B cell (primary cell): ENCODE measurements at regions of chr10 and their contacts with region 1.

Region 1: DNA sequence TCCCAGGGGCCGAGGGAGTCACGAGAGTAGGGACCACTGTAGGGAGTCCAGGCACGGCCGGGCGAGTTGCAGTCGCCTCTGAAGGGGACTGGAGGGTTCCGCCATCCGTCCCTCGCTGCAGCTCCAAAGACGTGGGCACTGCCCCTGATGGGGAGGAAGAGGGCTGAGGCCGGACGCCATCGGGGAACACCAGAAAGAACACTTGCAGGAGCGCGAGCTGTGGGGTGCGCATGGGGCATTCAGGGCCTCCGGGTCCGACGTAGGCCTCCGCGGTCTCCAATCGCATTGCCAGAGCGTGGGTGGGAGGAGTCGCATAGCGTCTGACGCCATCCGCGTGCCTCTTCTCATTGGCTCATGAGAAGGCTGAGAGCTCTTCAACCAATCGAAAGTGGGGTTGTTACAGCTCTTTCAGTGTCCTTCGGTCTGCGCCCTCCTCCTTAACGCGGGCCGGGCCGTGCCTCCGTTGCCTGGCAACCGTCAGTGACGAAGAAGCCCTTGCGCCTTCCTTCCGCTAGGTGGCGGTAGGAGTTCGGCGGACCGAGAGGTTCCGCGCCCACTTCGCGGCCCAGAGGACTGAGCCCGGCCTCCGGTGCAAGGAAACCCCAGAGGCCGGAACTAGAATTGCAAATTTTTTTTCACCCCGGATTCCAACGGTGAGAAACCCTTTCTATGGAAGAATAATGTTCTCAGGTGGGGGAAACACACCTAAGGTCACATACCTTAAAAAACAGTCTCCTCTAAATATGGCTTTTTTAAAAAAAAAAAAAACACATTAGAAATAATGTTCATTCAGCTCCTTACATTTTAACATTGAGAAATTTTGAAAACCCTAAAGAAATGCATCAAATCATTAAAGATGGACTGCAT is at the start of gene TCTN3:
- DNase-seq: peak; percentile 100
- ATAC-seq: peak; percentile 97
- H3K4me3 ChIP-seq: peak within 1 kb of the TSS; percentile 61 to 96 (median 73)
- H3K4me3 Mint-ChIP-seq: peak within 1 kb of the TSS; percentile 95
- H3K27ac ChIP-seq: peak within 1 kb of the TSS; percentile 58 to 93
- H3K27ac Mint-ChIP-seq: peak within 1 kb of the TSS; percentile 95
- H3K4me1 ChIP-seq: peaks cover 36 to 39% of the 10 kb centered on the region in 2 donors
- H3K4me1 Mint-ChIP-seq: peaks cover 67% of the 10 kb centered on the region
- H3K27me3 ChIP-seq: no peaks in the 10 kb centered on the region
- H3K27me3 Mint-ChIP-seq: no peaks in the 10 kb centered on the region
- CTCF ChIP-seq: peak; percentile 98
- total RNA-seq, gene TCTN3: 33.6 and 34.1 TPM in 2 replicates

Region 2: GRCh38 chr10:95706986-95707385 is 13.1 kb after region 1 on chr10:
- CTCF ChIA-PET with region 1: interaction called, 20 read pairs
- POLR2A ChIA-PET with region 1: interaction called, 3 read pairs
- intact Hi-C with region 1: no loop called
- DNase-seq: no peak
- ATAC-seq: no peak
- H3K4me3 ChIP-seq: no peak overlapping the region
- H3K4me3 Mint-ChIP-seq: no peak overlapping the region
- H3K27ac ChIP-seq: no peak overlapping the region
- H3K27ac Mint-ChIP-seq: no peak overlapping the region
- H3K4me1 ChIP-seq: no peaks in the 10 kb centered on the region
- H3K4me1 Mint-ChIP-seq: peaks cover 5% of the 10 kb centered on the region
- H3K27me3 ChIP-seq: no peaks in the 10 kb centered on the region
- H3K27me3 Mint-ChIP-seq: no peaks in the 10 kb centered on the region
- CTCF ChIP-seq: no peak

Region 3: DNA sequence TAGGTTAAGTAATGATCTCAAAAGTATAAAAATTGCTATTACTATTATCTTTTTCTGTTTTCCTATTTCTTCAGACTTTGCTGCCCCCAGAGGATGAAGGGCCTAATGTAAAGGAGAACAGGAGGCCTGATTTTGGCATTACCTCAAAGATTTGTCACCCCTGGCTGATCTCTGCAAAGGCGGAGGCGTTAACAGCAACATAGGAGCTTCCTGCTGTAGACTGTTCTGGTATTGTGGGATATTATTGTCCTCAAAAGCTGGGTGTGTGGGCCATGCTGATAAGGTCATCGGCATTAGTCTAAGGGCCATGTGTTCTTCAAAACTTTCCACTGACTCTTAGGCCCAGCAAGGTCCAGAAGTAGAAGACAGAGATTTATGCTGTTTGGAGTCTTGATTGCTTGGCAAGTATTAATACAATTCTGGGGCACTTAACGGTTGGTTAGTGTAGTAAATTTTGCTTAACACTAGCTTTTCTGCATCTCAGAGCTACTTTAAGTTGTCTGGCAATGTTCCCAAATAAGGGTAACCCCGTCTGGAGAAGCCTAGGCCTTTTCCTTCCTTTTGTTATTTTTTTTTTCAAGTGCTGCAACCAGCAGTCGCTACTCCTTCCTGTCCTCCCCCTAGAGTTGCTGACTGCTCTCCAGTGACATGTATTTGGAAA is 48.0 kb after region 1 on chr10:
- CTCF ChIA-PET with region 1: interaction called, 115 read pairs
- POLR2A ChIA-PET with region 1: interaction called, 5 read pairs
- intact Hi-C with region 1: loop called (anchors 1 kb)
- DNase-seq: peak; percentile 79
- ATAC-seq: peak; percentile 84
- H3K4me3 ChIP-seq: peak overlapping the region; percentile 7 to 63 (median 49)
- H3K4me3 Mint-ChIP-seq: peak overlapping the region; percentile 90
- H3K27ac ChIP-seq: peak overlapping the region; percentile 76 to 78
- H3K27ac Mint-ChIP-seq: peak overlapping the region; percentile 98
- H3K4me1 ChIP-seq: peaks cover 44 to 48% of the 10 kb centered on the region in 2 donors
- H3K4me1 Mint-ChIP-seq: peaks cover 55% of the 10 kb centered on the region
- H3K27me3 ChIP-seq: no peaks in the 10 kb centered on the region
- H3K27me3 Mint-ChIP-seq: no peaks in the 10 kb centered on the region
- CTCF ChIP-seq: peak; percentile 66

Region 4: DNA sequence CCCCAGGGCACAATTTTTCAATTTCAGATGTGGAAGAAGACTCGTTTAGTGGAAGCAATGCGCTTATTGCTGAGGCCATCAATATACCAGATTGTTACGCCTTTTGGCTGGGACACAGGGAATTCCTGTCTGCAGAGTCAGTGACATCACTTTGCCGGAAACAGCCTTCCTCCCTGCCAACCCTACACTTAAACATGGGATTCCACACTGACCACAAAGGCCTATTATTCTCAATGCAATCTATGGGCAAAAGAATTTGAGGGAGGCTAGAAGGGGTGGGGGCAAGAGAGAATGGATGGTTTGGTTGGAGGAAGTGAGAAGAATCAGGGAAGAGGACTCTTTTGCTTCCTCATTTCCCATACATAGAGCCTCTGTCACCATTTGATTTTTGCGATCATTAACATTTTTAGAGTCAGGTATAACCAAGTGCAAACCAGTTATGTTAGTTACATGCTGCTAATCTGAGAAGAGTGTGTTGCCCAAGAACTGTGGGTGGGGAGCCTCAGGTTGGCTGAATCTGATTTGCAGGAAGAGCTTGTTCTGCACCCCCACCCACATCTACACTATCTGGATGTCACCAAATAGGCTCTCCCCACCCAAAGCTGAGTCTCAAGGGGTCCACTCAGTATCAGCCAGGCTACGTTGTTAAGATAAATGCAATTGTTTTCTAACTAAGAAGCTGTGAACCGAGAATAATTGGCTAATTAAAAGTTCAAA is 120.3 kb after region 1 on chr10:
- CTCF ChIA-PET with region 1: interaction called, 57 read pairs
- POLR2A ChIA-PET with region 1: interaction called, 4 read pairs
- intact Hi-C with region 1: no loop called
- DNase-seq: no peak
- ATAC-seq: peak; percentile 45
- H3K4me3 ChIP-seq: no peak overlapping the region
- H3K4me3 Mint-ChIP-seq: peak overlapping the region; percentile 52
- H3K27ac ChIP-seq: no peak overlapping the region
- H3K27ac Mint-ChIP-seq: peak overlapping the region; percentile 28
- H3K4me1 ChIP-seq: peaks cover 27 to 46% of the 10 kb centered on the region in 2 donors
- H3K4me1 Mint-ChIP-seq: peaks cover 67% of the 10 kb centered on the region
- H3K27me3 ChIP-seq: no peaks in the 10 kb centered on the region
- H3K27me3 Mint-ChIP-seq: no peaks in the 10 kb centered on the region
- CTCF ChIP-seq: no peak

Region 5: DNA sequence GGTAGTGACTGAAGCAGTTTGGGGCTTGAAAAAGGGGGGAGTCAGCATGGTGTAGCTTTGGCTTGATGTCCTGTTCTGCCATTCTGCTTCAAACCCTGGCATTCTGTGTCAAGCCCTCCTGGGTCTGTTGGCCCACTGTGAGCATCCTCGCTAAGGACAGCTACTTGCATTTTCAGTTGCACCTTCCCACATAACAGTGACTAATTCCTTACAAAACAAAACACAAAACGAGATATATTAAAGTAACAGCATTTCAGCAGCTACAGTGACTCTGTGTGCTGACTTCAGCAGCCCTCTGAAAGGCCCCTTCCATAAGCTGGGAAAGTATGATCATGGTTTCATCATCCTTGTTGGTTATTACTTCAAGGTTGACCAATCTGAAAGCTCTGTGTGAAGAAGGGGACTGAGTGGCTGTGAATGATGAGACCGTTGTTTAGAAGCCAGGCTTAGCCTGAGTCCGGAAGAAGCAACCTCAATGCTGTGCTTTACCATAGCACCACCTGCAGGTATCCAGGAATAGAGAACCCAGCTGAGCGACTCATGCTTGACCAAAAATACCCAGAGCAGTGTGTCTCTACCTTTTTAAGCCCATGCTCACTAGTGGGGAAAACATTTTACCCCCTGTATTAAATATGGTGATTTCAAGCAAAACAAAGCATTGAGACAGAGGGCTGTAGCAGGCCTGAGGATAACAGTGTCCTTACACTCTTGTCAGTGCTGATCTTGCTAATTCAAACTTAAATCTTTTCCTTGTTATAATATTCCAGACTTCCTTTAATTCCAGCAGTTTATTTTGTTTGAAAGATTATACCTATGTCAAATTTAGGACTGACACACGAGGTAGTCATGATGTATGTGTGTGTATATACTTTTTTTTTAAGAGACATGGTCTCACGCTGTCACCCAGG is 171.3 kb after region 1 on chr10:
- CTCF ChIA-PET with region 1: interaction called, 221 read pairs
- POLR2A ChIA-PET with region 1: interaction called, 31 read pairs
- intact Hi-C with region 1: loop called (anchors 1 kb)
- DNase-seq: peak; percentile 83
- ATAC-seq: peak; percentile 99
- H3K4me3 ChIP-seq: no peak overlapping the region
- H3K4me3 Mint-ChIP-seq: no peak overlapping the region
- H3K27ac ChIP-seq: peak overlapping the region; percentile 26 to 75
- H3K27ac Mint-ChIP-seq: peak overlapping the region; percentile 88
- H3K4me1 ChIP-seq: peaks cover 11 to 13% of the 10 kb centered on the region in 2 donors
- H3K4me1 Mint-ChIP-seq: peaks cover 23% of the 10 kb centered on the region
- H3K27me3 ChIP-seq: no peaks in the 10 kb centered on the region
- H3K27me3 Mint-ChIP-seq: no peaks in the 10 kb centered on the region
- CTCF ChIP-seq: peak; percentile 88

Region 6: DNA sequence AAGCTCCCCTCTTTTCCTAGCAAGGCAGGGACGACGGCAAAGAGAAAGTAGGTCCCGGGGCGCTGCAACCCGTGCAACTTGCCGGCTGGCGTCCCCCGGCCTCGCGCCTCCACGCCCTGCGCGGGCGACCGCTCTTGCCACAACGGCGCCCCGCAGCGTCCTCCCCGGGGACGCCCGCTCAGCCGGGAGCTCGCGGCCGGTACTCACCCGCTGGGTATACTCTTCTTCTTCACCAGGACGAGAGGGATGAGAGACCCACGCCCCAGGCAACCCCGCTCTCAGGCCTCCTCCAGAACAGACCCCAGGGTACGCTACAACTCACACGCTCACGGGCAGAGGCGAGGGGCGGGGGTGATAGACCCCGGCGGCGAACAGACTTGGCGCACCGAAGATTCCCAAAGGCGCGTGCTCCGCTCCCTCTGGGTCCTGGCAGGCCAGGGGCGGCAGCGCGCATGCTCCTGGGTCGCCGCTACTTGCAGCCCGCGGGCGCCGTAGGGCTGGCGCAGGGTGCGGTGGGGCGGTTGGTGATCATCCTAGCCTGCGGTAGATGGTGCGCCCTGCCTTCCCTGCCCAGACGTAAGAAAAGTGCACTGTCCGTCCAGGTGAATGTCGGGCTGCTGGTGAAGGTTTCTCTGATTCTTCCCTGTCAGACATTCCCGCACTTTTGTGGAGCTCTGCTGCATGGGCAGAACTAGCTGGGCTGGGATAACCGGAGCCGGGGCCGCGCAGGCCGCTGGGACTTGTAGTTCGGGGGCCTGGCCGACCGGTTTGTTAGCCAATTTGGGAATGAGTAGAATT is 213.8 kb after region 1 on chr10 and contains the start of gene CC2D2B:
- CTCF ChIA-PET with region 1: interaction called, 16 read pairs
- POLR2A ChIA-PET with region 1: no interaction called
- intact Hi-C with region 1: no loop called
- DNase-seq: peak; percentile 80
- ATAC-seq: peak; percentile 92
- H3K4me3 ChIP-seq: peak within 1 kb of the TSS; percentile 71 to 95 (median 92)
- H3K4me3 Mint-ChIP-seq: peak within 1 kb of the TSS; percentile 95
- H3K27ac ChIP-seq: peak within 1 kb of the TSS; percentile 65 to 80
- H3K27ac Mint-ChIP-seq: peak within 1 kb of the TSS; percentile 92
- H3K4me1 ChIP-seq: peaks cover 16 to 20% of the 10 kb centered on the region in 2 donors
- H3K4me1 Mint-ChIP-seq: peaks cover 13% of the 10 kb centered on the region
- H3K27me3 ChIP-seq: no peaks in the 10 kb centered on the region
- H3K27me3 Mint-ChIP-seq: no peaks in the 10 kb centered on the region
- CTCF ChIP-seq: peak; percentile 8
- total RNA-seq, gene CC2D2B: 1.2 and 2.1 TPM in 2 replicates